ENCODE measurements at regions of chr5 and their contacts with region 1.

Region 1: DNA sequence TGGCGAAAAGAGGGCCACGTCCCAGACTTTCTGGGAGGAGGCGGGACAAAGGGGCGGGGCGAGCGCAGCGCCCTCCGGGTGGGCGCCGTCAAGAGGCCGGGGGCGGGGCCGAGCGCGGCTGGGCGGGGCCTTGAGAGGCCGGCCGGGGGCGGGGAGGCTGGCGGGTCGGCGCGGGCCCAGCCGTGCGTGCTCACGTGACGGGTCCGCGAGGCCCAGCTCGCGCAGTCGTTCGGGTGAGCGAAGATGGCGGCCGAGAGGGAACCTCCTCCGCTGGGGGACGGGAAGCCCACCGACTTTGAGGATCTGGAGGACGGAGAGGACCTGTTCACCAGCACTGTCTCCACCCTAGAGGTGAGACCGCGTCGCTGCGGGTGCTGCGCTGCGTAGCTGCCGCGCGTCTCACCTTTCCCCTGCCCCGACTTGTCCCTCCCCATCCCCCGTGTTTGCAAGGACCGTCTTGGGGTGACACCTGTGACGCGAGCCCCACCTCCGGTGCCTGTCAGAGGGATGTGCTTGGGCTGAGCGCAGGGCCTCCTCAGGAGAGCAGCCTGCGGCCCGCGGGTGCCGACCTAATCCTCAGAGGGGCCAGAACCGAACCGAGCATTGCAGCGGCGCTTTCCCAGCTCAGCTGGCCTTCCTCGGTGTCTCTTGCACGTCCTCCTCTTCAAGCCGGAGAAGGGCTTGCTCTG is at the start of gene SNX2:
- DNase-seq: peak; percentile 96
- ATAC-seq: peak; percentile 88
- H3K4me3 ChIP-seq: peak within 1 kb of the TSS; percentile 95 to 100 (median 99)
- H3K4me3 Mint-ChIP-seq: peak within 1 kb of the TSS; percentile 89
- H3K27ac ChIP-seq: peak within 1 kb of the TSS; percentile 100
- H3K27ac Mint-ChIP-seq: peak within 1 kb of the TSS; percentile 86
- H3K4me1 ChIP-seq: peaks cover 23 to 26% of the 10 kb centered on the region in 2 donors
- H3K4me1 Mint-ChIP-seq: peaks cover 35% of the 10 kb centered on the region
- H3K27me3 ChIP-seq: no peaks in the 10 kb centered on the region
- H3K27me3 Mint-ChIP-seq: no peaks in the 10 kb centered on the region
- CTCF ChIP-seq: peak; percentile 58
- total RNA-seq, gene SNX2: 266 and 270 TPM in 2 replicates

Region 2: GRCh38 chr5:121968910-121969607 is 805.9 kb before region 1 on chr5:
- CTCF ChIA-PET with region 1: no interaction called
- POLR2A ChIA-PET with region 1: no interaction called
- intact Hi-C with region 1: loop called (anchors 10 kb)
- DNase-seq: no peak
- ATAC-seq: no peak
- H3K4me3 ChIP-seq: no peak overlapping the region
- H3K4me3 Mint-ChIP-seq: no peak overlapping the region
- H3K27ac ChIP-seq: no peak overlapping the region
- H3K27ac Mint-ChIP-seq: no peak overlapping the region
- H3K4me1 ChIP-seq: peaks cover 0 to 4% of the 10 kb centered on the region in 2 donors
- H3K4me1 Mint-ChIP-seq: peaks cover 37% of the 10 kb centered on the region
- H3K27me3 ChIP-seq: no peaks in the 10 kb centered on the region
- H3K27me3 Mint-ChIP-seq: no peaks in the 10 kb centered on the region
- CTCF ChIP-seq: no peak

Region 3: GRCh38 chr5:122756263-122756911 is 18.6 kb before region 1 on chr5:
- CTCF ChIA-PET with region 1: interaction called, 4 read pairs
- POLR2A ChIA-PET with region 1: no interaction called
- intact Hi-C with region 1: loop called (anchors 2 kb)
- DNase-seq: peak; percentile 57
- ATAC-seq: peak; percentile 81
- H3K4me3 ChIP-seq: no peak overlapping the region
- H3K4me3 Mint-ChIP-seq: peak overlapping the region; percentile 13
- H3K27ac ChIP-seq: peak overlapping the region in 1 of 2 donors; percentile 40
- H3K27ac Mint-ChIP-seq: peak overlapping the region; percentile 20
- H3K4me1 ChIP-seq: peaks cover 18 to 23% of the 10 kb centered on the region in 2 donors
- H3K4me1 Mint-ChIP-seq: peaks cover 30% of the 10 kb centered on the region
- H3K27me3 ChIP-seq: no peaks in the 10 kb centered on the region
- H3K27me3 Mint-ChIP-seq: no peaks in the 10 kb centered on the region
- CTCF ChIP-seq: no peak

Region 4: DNA sequence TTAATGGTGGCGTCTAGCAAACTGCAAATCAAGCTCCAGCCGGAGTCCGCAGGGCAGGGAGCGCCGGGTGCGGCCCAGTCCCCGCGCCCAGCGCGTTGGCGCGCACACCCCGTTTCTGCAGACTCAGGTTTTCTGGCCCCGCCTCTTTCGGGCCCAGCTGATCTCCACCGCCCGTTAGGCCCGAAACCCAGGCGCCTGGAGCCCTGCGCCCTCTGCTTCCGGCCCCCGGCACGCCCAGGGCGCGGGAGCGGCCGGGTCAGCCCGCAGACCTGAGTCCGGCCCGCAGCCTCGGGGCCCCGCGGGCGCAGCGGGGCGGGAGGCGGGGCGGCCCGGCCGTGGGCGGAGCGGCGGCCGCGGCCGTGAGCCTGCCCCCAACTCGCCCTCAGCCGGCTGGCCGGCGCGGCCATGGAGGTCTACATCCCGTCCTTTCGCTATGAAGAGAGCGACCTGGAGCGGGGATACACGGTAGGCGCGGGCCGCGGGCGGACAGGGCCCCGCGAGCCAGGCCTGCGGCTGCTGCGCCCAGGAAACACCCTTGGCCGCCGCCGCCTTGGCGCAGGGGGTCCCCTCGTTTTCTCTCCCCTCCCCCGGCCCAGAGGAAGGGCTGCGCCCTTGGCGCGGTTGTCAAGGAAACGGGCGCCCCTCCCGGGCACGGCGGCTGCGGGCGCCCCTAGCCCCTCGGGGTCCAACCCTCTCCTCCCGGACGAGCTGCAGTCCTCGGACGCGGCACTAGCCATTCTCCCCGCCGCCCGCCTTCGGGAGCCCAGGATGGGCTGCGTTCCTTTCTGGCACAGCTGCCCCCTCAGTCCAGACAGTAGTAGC is 70.4 kb after region 1 on chr5 and contains the start of gene SNX24:
- CTCF ChIA-PET with region 1: no interaction called
- POLR2A ChIA-PET with region 1: no interaction called
- intact Hi-C with region 1: loop called (anchors 2 kb)
- DNase-seq: peak; percentile 81
- ATAC-seq: peak; percentile 80
- H3K4me3 ChIP-seq: peak within 1 kb of the TSS; percentile 53 to 94 (median 81)
- H3K4me3 Mint-ChIP-seq: peak within 1 kb of the TSS; percentile 94
- H3K27ac ChIP-seq: peak within 1 kb of the TSS; percentile 26 to 60
- H3K27ac Mint-ChIP-seq: peak within 1 kb of the TSS; percentile 83
- H3K4me1 ChIP-seq: peaks cover 24 to 26% of the 10 kb centered on the region in 2 donors
- H3K4me1 Mint-ChIP-seq: peaks cover 43% of the 10 kb centered on the region
- H3K27me3 ChIP-seq: no peaks in the 10 kb centered on the region
- H3K27me3 Mint-ChIP-seq: no peaks in the 10 kb centered on the region
- CTCF ChIP-seq: no peak
- total RNA-seq, gene SNX24: 7.9 and 9.3 TPM in 2 replicates

Region 5: DNA sequence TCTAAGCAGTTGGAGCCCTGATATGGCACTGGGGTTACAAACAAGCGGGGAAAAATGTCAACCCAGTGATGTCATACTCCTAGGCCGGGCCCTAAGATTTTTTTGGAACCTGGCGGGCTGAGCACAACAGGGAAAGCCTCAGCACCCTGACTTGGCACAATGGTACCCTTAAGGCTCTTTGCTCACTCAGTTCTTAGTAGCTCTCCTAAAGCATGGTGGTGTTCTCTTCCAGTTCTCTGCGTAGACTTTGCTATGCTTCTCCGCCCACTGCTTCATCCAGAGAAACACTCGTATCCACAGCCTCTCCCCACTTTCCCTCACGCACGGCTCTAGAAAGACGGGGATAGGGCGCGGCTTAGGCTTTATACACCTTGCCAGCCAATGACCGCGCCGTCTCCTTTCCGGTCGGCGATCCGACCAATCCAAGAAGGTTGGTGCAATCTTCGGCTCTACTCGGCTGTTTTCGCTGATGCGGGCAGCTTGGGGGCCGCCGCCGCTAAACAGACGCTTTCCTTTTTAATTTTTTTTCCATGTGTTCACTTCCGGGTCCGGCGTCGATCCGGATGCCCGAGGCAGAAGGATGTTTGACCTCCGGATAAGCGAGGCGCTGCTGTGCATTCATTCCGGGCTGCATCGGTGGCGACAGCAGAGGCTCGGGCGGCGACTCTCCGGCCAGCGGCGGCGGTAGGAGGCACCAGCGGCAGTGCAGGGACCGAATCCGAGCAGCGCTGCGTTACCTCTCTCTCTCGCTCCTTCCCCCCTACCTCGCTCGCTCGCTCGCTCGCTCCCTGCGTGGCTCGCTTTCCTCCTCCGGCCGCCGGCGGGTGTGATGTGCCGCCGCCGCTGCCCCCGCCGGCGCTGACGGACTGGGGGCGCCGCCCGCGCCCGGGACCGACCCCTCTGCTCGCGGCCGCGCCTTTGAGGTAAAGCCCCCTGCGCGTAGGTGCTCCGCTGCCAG is 736.9 kb after region 1 on chr5 and contains the start of gene CSNK1G3:
- CTCF ChIA-PET with region 1: no interaction called
- POLR2A ChIA-PET with region 1: no interaction called
- intact Hi-C with region 1: loop called (anchors 1 kb)
- DNase-seq: peak; percentile 95
- ATAC-seq: peak; percentile 89
- H3K4me3 ChIP-seq: peak within 1 kb of the TSS; percentile 86 to 92 (median 89)
- H3K4me3 Mint-ChIP-seq: peak within 1 kb of the TSS; percentile 100
- H3K27ac ChIP-seq: peak within 1 kb of the TSS; percentile 89 to 90
- H3K27ac Mint-ChIP-seq: peak within 1 kb of the TSS; percentile 99
- H3K4me1 ChIP-seq: peaks cover 33 to 39% of the 10 kb centered on the region in 2 donors
- H3K4me1 Mint-ChIP-seq: peaks cover 41% of the 10 kb centered on the region
- H3K27me3 ChIP-seq: no peaks in the 10 kb centered on the region
- H3K27me3 Mint-ChIP-seq: peaks cover 3% of the 10 kb centered on the region
- CTCF ChIP-seq: no peak
- total RNA-seq, gene CSNK1G3: 140 and 148 TPM in 2 replicates